Heart left ventricle (tissue), 16 donors: ENCODE measurements at regions of chr6 and their contacts with region 1.

Region 1: GRCh38 chr6:136643850-136644596 is 93.8 kb upstream of the MAP7 start:
- DNase-seq: peak; percentile 88 to 96 (median 89)
- ATAC-seq: peak; percentile 94 to 96 (median 94)
- H3K4me3 ChIP-seq: no peak overlapping the region
- H3K27ac ChIP-seq: peak overlapping the region in 11 of 12 donors; percentile 9 to 76 (median 61)
- H3K4me1 ChIP-seq: peaks cover 0 to 56% (median 23%) of the 10 kb centered on the region in 12 donors
- H3K27me3 ChIP-seq: no peaks in the 10 kb centered on the region
- CTCF ChIP-seq: peak; percentile 71 to 95 (median 86)
- POLR2A ChIP-seq: peak in 1 of 2 donors; percentile 9

Region 2: DNA sequence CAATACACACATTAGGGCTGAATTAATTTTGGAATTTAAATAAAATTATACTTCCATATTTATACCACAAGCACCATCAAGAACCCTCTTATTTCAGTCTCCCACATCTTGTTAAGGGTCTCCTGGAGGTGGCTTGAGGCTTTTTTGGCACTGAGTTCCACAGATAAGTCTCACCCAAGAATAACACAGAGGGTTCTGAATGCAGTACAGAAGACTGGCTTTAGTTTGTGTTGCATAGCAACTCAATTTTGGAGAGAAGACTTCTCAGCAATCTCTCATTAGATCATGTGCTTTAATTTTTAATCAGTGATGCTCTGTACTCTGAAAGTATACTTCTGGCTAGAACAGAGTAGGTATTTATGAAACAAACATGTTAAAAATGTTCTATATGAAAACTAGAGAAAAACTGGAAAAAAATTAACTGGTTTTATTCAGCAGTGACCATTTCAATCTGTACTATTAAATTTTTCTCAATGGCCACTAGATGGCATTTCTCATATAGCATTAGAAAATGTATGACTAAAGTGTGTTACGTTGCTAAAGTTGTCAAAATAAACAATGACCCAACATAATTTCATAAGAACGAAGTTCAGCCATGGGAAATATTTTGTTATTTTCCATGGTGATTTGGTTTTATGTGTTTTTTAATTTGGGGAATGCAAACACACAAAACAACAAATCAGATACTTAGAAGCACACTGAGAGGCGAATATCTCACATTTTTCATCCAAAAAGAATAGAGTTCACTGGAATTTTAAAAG is 61.1 kb before region 1 on chr6:
- intact Hi-C with region 1: loop called in 1 of 10 experiments (anchors 5 kb)
- DNase-seq: no peak
- ATAC-seq: peak in 3 of 4 donors; percentile 42 to 55 (median 54)
- H3K4me3 ChIP-seq: no peak overlapping the region
- H3K27ac ChIP-seq: peak overlapping the region in 8 of 12 donors; percentile 2 to 57 (median 36)
- H3K4me1 ChIP-seq: peaks cover 0 to 28% (median 9%) of the 10 kb centered on the region in 12 donors
- H3K27me3 ChIP-seq: no peaks in the 10 kb centered on the region
- CTCF ChIP-seq: peak; percentile 40 to 64 (median 53)
- POLR2A ChIP-seq: no peak